H1 (cell line): ENCODE measurements at regions of chrX and their contacts with region 1.

Region 1: GRCh38 chrX:101759000-101759399 is 99.3 kb upstream of the ARMCX2 start:
- DNase-seq: peak; percentile 45 to 53
- H3K4me3 ChIP-seq: no peak overlapping the region
- H3K27ac ChIP-seq: no peak overlapping the region
- H3K4me1 ChIP-seq: peaks cover 0 to 3% (median 0%) of the 10 kb centered on the region in 4 experiments; a peak in 1 of 7 replicates
- H3K27me3 ChIP-seq: no peaks in the 10 kb centered on the region
- CTCF ChIP-seq: peak in 1 of 3 experiments; percentile 45; a peak in 1 of 4 replicates
- EP300 ChIP-seq: no peak
- POLR2A ChIP-seq: no peak
- RAD21 ChIP-seq: peak; percentile 19 to 32; a peak in 3 of 4 replicates

Region 2: DNA sequence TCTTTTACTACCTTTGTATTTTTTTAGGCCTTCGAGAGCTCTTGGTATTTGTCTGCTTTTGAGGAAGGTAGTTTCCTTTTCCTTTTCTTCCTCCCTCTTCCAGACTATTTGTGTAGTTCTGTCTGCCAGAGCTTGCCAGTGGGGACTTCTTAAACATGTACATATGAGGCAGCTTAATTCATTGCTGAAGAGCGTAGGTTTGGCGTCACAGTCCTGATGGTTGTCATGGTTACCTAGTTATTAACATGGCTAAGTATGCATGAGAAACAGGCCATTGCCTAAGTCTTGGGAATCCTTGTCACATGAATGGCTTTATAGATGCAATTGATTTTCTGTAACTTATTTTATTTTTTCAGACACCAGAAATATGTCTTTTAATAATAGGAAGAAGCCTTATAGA is 50.8 kb before region 1 on chrX:
- CTCF ChIA-PET with region 1: no interaction called
- POLR2A ChIA-PET with region 1: no interaction called
- DNase-seq: no peak
- H3K4me3 ChIP-seq: no peak overlapping the region
- H3K27ac ChIP-seq: no peak overlapping the region
- H3K4me1 ChIP-seq: no peaks in the 10 kb centered on the region
- H3K27me3 ChIP-seq: no peaks in the 10 kb centered on the region
- CTCF ChIP-seq: no peak
- EP300 ChIP-seq: no peak
- POLR2A ChIP-seq: no peak
- RAD21 ChIP-seq: no peak

Region 3: GRCh38 chrX:101744085-101744484 is 14.9 kb before region 1 on chrX:
- CTCF ChIA-PET with region 1: interaction called, 16 read pairs
- POLR2A ChIA-PET with region 1: no interaction called
- DNase-seq: no peak
- H3K4me3 ChIP-seq: no peak overlapping the region
- H3K27ac ChIP-seq: no peak overlapping the region
- H3K4me1 ChIP-seq: no peaks in the 10 kb centered on the region
- H3K27me3 ChIP-seq: no peaks in the 10 kb centered on the region
- CTCF ChIP-seq: no peak
- EP300 ChIP-seq: no peak
- POLR2A ChIP-seq: no peak
- RAD21 ChIP-seq: no peak

Region 4: GRCh38 chrX:101823236-101823635 is 64.2 kb after region 1 on chrX:
- CTCF ChIA-PET with region 1: no interaction called
- POLR2A ChIA-PET with region 1: no interaction called
- DNase-seq: no peak
- H3K4me3 ChIP-seq: no peak overlapping the region
- H3K27ac ChIP-seq: no peak overlapping the region
- H3K4me1 ChIP-seq: no peaks in the 10 kb centered on the region
- H3K27me3 ChIP-seq: no peaks in the 10 kb centered on the region
- CTCF ChIP-seq: no peak
- EP300 ChIP-seq: no peak
- POLR2A ChIP-seq: no peak
- RAD21 ChIP-seq: no peak

Region 5: GRCh38 chrX:101863902-101864301 is 104.9 kb after region 1 on chrX:
- CTCF ChIA-PET with region 1: no interaction called
- POLR2A ChIA-PET with region 1: no interaction called
- DNase-seq: no peak
- H3K4me3 ChIP-seq: no peak overlapping the region
- H3K27ac ChIP-seq: no peak overlapping the region
- H3K4me1 ChIP-seq: no peaks in the 10 kb centered on the region
- H3K27me3 ChIP-seq: no peaks in the 10 kb centered on the region
- CTCF ChIP-seq: no peak
- EP300 ChIP-seq: no peak
- POLR2A ChIP-seq: no peak
- RAD21 ChIP-seq: no peak

Region 6: GRCh38 chrX:101918751-101919150 is 159.8 kb after region 1 on chrX:
- CTCF ChIA-PET with region 1: no interaction called
- POLR2A ChIA-PET with region 1: no interaction called
- DNase-seq: no peak
- H3K4me3 ChIP-seq: no peak overlapping the region
- H3K27ac ChIP-seq: no peak overlapping the region
- H3K4me1 ChIP-seq: no peaks in the 10 kb centered on the region
- H3K27me3 ChIP-seq: no peaks in the 10 kb centered on the region
- CTCF ChIP-seq: no peak
- EP300 ChIP-seq: no peak
- POLR2A ChIP-seq: no peak
- RAD21 ChIP-seq: no peak